GM12878 (cell line): ENCODE measurements at regions of chr3 and their contacts with region 1.

Region 1: DNA sequence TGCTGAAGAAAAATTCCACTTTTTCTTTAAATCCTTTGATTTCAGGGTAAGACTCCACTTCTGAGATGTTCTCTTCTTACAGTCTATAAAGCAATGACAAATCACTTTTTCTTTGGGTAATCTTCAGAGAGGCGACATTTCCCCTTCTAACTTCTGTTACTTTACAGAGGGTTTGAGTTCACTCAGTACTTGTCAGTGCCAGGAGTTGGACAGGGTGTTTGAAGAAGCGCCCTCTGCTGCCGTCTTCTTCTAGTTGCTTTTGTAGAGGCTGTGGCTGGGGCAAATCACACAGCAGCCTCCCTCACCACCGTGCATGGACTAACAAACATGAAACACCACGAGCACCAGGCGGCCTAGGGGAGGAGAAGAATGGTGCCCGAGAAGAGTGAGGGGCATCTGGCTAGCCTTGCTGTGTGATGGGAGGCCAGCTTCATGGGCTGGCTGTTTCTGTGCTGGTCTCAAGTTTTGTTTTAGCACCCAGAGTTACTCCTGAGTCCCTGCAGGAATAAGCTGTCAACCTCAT is at the start of gene CD80:
- DNase-seq: peak; percentile 82
- ATAC-seq: peak; percentile 72
- H3K4me3 ChIP-seq: peak within 1 kb of the TSS; percentile 76
- H3K27ac ChIP-seq: peak within 1 kb of the TSS; percentile 98
- H3K4me1 ChIP-seq: peaks cover 22% of the 10 kb centered on the region
- H3K27me3 ChIP-seq: no peaks in the 10 kb centered on the region
- CTCF ChIP-seq: peak; percentile 66 to 81 (median 68)
- EP300 ChIP-seq: peak in 1 of 2 experiments; percentile 22; a peak in 1 of 4 replicates
- POLR2A ChIP-seq: peak; percentile 67; the same call in 1 of the 2 replicates
- RAD21 ChIP-seq: peak; percentile 67
- polyA plus RNA-seq, gene CD80: 42.5 to 54.1 TPM

Region 2: GRCh38 chr3:118641608-118642007 is 917.9 kb before region 1 on chr3:
- CTCF ChIA-PET with region 1: no interaction called
- POLR2A ChIA-PET with region 1: no interaction called
- RAD21 ChIA-PET with region 1: no interaction called
- SMC1A ChIA-PET with region 1: no interaction called
- in situ Hi-C with region 1: no loop called
- intact Hi-C with region 1: no loop called
- DNase-seq: no peak
- ATAC-seq: peak; percentile 72
- H3K4me3 ChIP-seq: no peak overlapping the region
- H3K27ac ChIP-seq: no peak overlapping the region
- H3K4me1 ChIP-seq: no peaks in the 10 kb centered on the region
- H3K27me3 ChIP-seq: no peaks in the 10 kb centered on the region
- CTCF ChIP-seq: no peak
- EP300 ChIP-seq: no peak
- POLR2A ChIP-seq: no peak
- RAD21 ChIP-seq: no peak

Region 3: GRCh38 chr3:119322835-119323722 is 236.4 kb before region 1 on chr3:
- CTCF ChIA-PET with region 1: no interaction called
- POLR2A ChIA-PET with region 1: no interaction called
- RAD21 ChIA-PET with region 1: interaction called, 3 read pairs
- SMC1A ChIA-PET with region 1: no interaction called
- in situ Hi-C with region 1: no loop called
- intact Hi-C with region 1: loop called (anchors 5 kb)
- DNase-seq: peak; percentile 73
- ATAC-seq: peak; percentile 92
- H3K4me3 ChIP-seq: peak overlapping the region; percentile 78
- H3K27ac ChIP-seq: peak overlapping the region; percentile 97
- H3K4me1 ChIP-seq: peaks cover 31% of the 10 kb centered on the region
- H3K27me3 ChIP-seq: no peaks in the 10 kb centered on the region
- CTCF ChIP-seq: no peak
- EP300 ChIP-seq: peak; percentile 72 to 87; a peak in 3 of 4 replicates
- POLR2A ChIP-seq: peak; percentile 95
- RAD21 ChIP-seq: no peak

Region 4: GRCh38 chr3:119408243-119408950 is 151.1 kb before region 1 on chr3:
- CTCF ChIA-PET with region 1: no interaction called
- POLR2A ChIA-PET with region 1: no interaction called
- RAD21 ChIA-PET with region 1: no interaction called
- SMC1A ChIA-PET with region 1: no interaction called
- in situ Hi-C with region 1: no loop called
- intact Hi-C with region 1: no loop called
- DNase-seq: peak; percentile 12
- ATAC-seq: peak; percentile 71
- H3K4me3 ChIP-seq: no peak overlapping the region
- H3K27ac ChIP-seq: peak overlapping the region; percentile 27
- H3K4me1 ChIP-seq: peaks cover 6% of the 10 kb centered on the region; the same call in 1 of the 2 replicates
- H3K27me3 ChIP-seq: no peaks in the 10 kb centered on the region
- CTCF ChIP-seq: no peak
- EP300 ChIP-seq: no peak
- POLR2A ChIP-seq: no peak
- RAD21 ChIP-seq: no peak

Region 5: GRCh38 chr3:119498186-119498987 is 61.1 kb before region 1 on chr3 and contains the start of gene TIMMDC1:
- CTCF ChIA-PET with region 1: interaction called, 9 read pairs
- POLR2A ChIA-PET with region 1: interaction called, 12 read pairs
- RAD21 ChIA-PET with region 1: interaction called, 7 read pairs
- SMC1A ChIA-PET with region 1: interaction called, 21 read pairs
- in situ Hi-C with region 1: no loop called
- intact Hi-C with region 1: loop called (anchors 2 kb)
- DNase-seq: peak; percentile 83
- ATAC-seq: peak; percentile 96
- H3K4me3 ChIP-seq: peak within 1 kb of the TSS; percentile 75
- H3K27ac ChIP-seq: peak within 1 kb of the TSS; percentile 94
- H3K4me1 ChIP-seq: no peaks in the 10 kb centered on the region
- H3K27me3 ChIP-seq: no peaks in the 10 kb centered on the region
- CTCF ChIP-seq: no peak
- EP300 ChIP-seq: peak in 1 of 2 experiments; percentile 27; a peak in 1 of 4 replicates
- POLR2A ChIP-seq: peak; percentile 96
- RAD21 ChIP-seq: no peak
- polyA plus RNA-seq, gene TIMMDC1: 136 to 146 TPM

Region 6: DNA sequence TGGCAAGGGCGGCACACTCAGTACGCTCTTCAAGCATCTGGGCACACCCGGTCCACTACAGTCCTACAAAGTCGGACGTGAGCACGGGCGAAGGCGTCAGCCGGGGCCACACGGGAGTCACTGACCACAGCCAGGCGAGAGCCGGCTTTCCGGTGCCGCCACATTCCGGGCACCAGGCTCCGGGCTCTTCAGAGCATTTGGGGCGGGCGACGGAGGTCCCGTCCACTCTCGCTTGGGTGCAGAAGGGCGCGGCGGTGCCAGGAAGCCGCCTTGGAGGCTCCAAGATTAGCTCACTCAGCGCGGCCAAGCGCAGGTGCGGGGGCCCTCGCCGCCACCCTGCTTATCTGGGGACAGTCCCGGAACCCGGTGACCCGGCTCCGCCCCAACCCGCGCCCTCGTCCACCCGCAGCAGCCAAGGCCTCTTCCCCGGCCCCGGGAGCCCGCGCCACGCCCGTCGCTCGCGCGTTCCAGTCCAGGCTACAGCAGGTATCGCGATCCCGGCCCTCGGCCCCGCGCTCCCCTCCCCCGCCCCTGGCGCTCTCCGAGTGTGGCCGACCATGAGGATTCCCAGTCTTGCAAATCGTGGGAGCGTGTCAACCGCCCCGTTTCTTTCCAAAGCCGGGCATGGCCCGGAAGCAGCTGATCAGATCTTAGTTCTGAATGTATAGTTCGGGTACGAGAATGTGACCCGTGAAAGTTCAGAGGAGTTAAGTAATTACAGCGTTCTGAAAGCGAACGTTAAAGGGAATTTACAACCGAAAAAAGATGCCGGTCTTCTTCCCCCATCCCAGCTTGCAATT is 20.1 kb after region 1 on chr3 and contains the start of gene ADPRH:
- CTCF ChIA-PET with region 1: interaction called, 21 read pairs
- POLR2A ChIA-PET with region 1: interaction called, 63 read pairs
- RAD21 ChIA-PET with region 1: interaction called, 35 read pairs
- SMC1A ChIA-PET with region 1: interaction called, 56 read pairs
- in situ Hi-C with region 1: no loop called
- intact Hi-C with region 1: no loop called
- DNase-seq: no peak
- ATAC-seq: peak; percentile 80
- H3K4me3 ChIP-seq: peak within 1 kb of the TSS; percentile 84
- H3K27ac ChIP-seq: peak within 1 kb of the TSS; percentile 97
- H3K4me1 ChIP-seq: peaks cover 17% of the 10 kb centered on the region
- H3K27me3 ChIP-seq: no peaks in the 10 kb centered on the region
- CTCF ChIP-seq: no peak
- EP300 ChIP-seq: no peak
- POLR2A ChIP-seq: peak; percentile 80
- RAD21 ChIP-seq: no peak
- polyA plus RNA-seq, gene ADPRH: 2.3 to 3.7 TPM

Region 7: DNA sequence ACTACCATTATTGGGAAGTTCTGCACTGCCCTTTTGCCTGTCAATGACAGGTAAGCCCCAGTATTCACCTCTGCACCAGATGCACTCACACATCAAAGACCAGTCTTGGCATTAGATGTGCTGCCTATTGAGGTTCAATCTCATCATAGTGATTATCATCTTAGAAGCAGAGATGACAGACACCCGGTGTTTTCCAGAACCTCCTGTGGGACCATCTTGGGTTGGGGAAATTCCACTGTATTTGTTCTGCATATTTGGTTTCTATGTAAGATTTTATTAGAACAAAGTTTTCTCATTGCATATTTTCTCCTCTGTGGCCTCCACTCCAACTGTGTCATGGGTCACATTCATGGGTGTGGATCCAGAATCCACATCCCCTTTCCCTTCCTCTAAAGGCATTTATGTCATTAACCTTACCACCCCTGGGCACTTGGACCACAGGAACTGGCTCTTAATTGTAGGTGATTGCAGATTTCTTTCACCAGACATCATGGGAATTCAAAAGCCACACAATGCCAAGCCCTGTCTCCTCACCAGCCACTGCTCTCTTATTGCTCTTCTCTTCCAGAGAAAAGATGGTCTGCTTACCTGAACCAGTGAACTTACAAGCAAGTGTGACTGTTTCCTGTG is 69.4 kb after region 1 on chr3:
- CTCF ChIA-PET with region 1: interaction called, 15 read pairs
- POLR2A ChIA-PET with region 1: interaction called, 4 read pairs
- RAD21 ChIA-PET with region 1: interaction called, 5 read pairs
- SMC1A ChIA-PET with region 1: interaction called, 4 read pairs
- in situ Hi-C with region 1: no loop called
- intact Hi-C with region 1: loop called (anchors 1 kb)
- DNase-seq: peak; percentile 64
- ATAC-seq: peak; percentile 71
- H3K4me3 ChIP-seq: peak overlapping the region; percentile 24; the same call in 1 of the 2 replicates
- H3K27ac ChIP-seq: peak overlapping the region; percentile 84
- H3K4me1 ChIP-seq: peaks cover 49% of the 10 kb centered on the region
- H3K27me3 ChIP-seq: no peaks in the 10 kb centered on the region
- CTCF ChIP-seq: no peak
- EP300 ChIP-seq: peak in 1 of 2 experiments; percentile 18; a peak in 1 of 4 replicates
- POLR2A ChIP-seq: no peak
- RAD21 ChIP-seq: no peak

Region 8: GRCh38 chr3:119774444-119774843 is 214.9 kb after region 1 on chr3:
- CTCF ChIA-PET with region 1: no interaction called
- POLR2A ChIA-PET with region 1: no interaction called
- RAD21 ChIA-PET with region 1: no interaction called
- SMC1A ChIA-PET with region 1: no interaction called
- in situ Hi-C with region 1: no loop called
- intact Hi-C with region 1: no loop called
- DNase-seq: peak; percentile 16
- ATAC-seq: peak; percentile 96
- H3K4me3 ChIP-seq: no peak overlapping the region
- H3K27ac ChIP-seq: no peak overlapping the region
- H3K4me1 ChIP-seq: peaks cover 7% of the 10 kb centered on the region; the same call in 1 of the 2 replicates
- H3K27me3 ChIP-seq: no peaks in the 10 kb centered on the region
- CTCF ChIP-seq: no peak
- EP300 ChIP-seq: no peak
- POLR2A ChIP-seq: no peak
- RAD21 ChIP-seq: no peak

Region 9: DNA sequence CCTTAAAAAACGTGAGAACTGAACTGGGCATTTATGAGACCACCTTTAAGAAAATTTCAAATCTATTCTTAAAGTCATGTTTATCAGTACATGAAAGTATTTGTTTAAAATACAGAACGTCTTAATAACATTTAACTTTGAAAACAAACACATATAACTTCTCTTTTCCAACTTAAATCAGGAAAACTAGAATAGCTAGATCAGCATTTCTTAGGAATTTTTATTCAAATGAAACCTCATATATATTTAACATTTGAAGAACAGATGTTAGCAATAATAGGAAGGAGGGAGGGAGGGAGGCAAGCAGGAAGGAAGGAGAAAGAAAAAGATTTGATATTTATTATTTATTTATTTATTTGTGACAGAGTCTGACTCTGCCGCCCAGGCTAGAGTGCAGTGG is 342.6 kb after region 1 on chr3:
- CTCF ChIA-PET with region 1: no interaction called
- POLR2A ChIA-PET with region 1: no interaction called
- RAD21 ChIA-PET with region 1: no interaction called
- SMC1A ChIA-PET with region 1: no interaction called
- in situ Hi-C with region 1: no loop called
- intact Hi-C with region 1: no loop called
- DNase-seq: no peak
- ATAC-seq: no peak
- H3K4me3 ChIP-seq: no peak overlapping the region
- H3K27ac ChIP-seq: no peak overlapping the region
- H3K4me1 ChIP-seq: no peaks in the 10 kb centered on the region
- H3K27me3 ChIP-seq: no peaks in the 10 kb centered on the region
- CTCF ChIP-seq: no peak
- EP300 ChIP-seq: no peak
- POLR2A ChIP-seq: no peak
- RAD21 ChIP-seq: no peak